Naive thymus-derived CD4-positive, alpha-beta T cell (primary cell): ENCODE measurements at regions of chr12 and their contacts with region 1.

Region 1: DNA sequence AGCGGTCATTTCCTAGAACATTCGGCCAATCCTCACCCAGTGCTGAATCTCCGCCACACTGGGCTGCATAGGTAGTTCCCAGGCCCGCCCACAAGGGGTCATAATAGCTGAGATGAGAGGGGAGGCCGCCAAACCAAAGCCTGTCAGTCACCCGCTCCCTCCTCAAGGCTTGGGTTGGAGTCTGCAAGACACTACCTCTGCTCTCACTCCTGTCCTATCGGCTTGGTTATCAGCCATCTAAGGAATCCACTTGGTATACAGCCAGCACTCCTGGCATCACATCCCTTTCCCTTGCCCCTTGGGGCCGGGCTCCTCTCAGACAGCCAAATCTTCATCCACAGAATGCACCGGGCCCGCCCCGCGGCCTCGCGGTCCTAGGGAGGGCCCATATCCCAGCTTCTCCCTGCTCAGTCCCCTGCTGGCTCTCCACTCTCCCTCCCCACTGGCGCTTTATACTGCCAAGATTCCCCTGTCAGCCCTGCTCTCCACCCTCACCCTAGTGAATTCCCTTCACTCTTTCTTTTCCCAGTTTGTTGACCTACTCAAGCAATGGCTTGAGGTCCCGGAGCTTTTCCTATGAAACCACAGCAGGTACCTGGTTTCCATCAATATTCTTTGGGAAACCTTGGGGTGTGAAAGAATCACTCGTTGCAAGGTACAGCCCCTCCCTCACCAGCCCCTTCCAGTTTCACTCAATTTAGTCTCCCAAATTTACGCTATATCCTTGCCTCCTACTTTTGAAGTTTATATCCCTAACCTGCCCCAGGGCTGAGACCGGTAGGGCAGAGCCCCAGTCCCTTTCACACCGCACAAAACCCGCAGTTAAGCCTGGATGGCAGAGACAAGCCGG is 1.4 kb downstream of the IFFO1 start:
- DNase-seq: peak; percentile 38 to 57 (median 52)
- ATAC-seq: peak; percentile 67
- H3K4me3 ChIP-seq: peak overlapping the region; percentile 92
- H3K4me3 Mint-ChIP-seq: peak overlapping the region; percentile 80 to 96 (median 90)
- H3K27ac ChIP-seq: peak overlapping the region; percentile 71
- H3K27ac Mint-ChIP-seq: peak overlapping the region; percentile 14 to 88 (median 55)
- H3K4me1 ChIP-seq: peaks cover 26 to 29% of the 10 kb centered on the region in 2 donors
- H3K4me1 Mint-ChIP-seq: peaks cover 39 to 62% (median 56%) of the 10 kb centered on the region in 7 donors
- H3K27me3 ChIP-seq: no peaks in the 10 kb centered on the region
- H3K27me3 Mint-ChIP-seq: no peaks in the 10 kb centered on the region

Region 2: GRCh38 chr12:5184186-5184585 is 1370.2 kb before region 1 on chr12:
- CTCF ChIA-PET with region 1: no interaction called
- POLR2A ChIA-PET with region 1: no interaction called
- intact Hi-C with region 1: no loop called
- DNase-seq: no peak
- ATAC-seq: no peak
- H3K4me3 ChIP-seq: no peak overlapping the region
- H3K4me3 Mint-ChIP-seq: no peak overlapping the region
- H3K27ac ChIP-seq: no peak overlapping the region
- H3K27ac Mint-ChIP-seq: no peak overlapping the region
- H3K4me1 ChIP-seq: no peaks in the 10 kb centered on the region
- H3K4me1 Mint-ChIP-seq: no peaks in the 10 kb centered on the region
- H3K27me3 ChIP-seq: no peaks in the 10 kb centered on the region
- H3K27me3 Mint-ChIP-seq: peaks cover 4 to 20% (median 5%) of the 10 kb centered on the region in 5 donors

Region 3: GRCh38 chr12:6294156-6295093 is 260.0 kb before region 1 on chr12:
- CTCF ChIA-PET with region 1: no interaction called
- POLR2A ChIA-PET with region 1: no interaction called
- intact Hi-C with region 1: no loop called
- DNase-seq: no peak
- ATAC-seq: no peak
- H3K4me3 ChIP-seq: no peak overlapping the region
- H3K4me3 Mint-ChIP-seq: no peak overlapping the region
- H3K27ac ChIP-seq: no peak overlapping the region
- H3K27ac Mint-ChIP-seq: no peak overlapping the region
- H3K4me1 ChIP-seq: no peaks in the 10 kb centered on the region
- H3K4me1 Mint-ChIP-seq: peaks cover 0 to 3% (median 0%) of the 10 kb centered on the region in 7 donors
- H3K27me3 ChIP-seq: no peaks in the 10 kb centered on the region
- H3K27me3 Mint-ChIP-seq: peaks cover 0 to 12% (median 5%) of the 10 kb centered on the region in 5 donors

Region 4: GRCh38 chr12:6323340-6323994 is 230.9 kb before region 1 on chr12:
- CTCF ChIA-PET with region 1: no interaction called
- POLR2A ChIA-PET with region 1: no interaction called
- intact Hi-C with region 1: loop called in 1 of 2 experiments (anchors 5 kb)
- DNase-seq: peak in 5 of 9 donors; percentile 49 to 59 (median 52)
- ATAC-seq: peak; percentile 90
- H3K4me3 ChIP-seq: peak overlapping the region; percentile 45
- H3K4me3 Mint-ChIP-seq: peak overlapping the region; percentile 63 to 90 (median 82)
- H3K27ac ChIP-seq: peak overlapping the region; percentile 35
- H3K27ac Mint-ChIP-seq: peak overlapping the region; percentile 68 to 95 (median 89)
- H3K4me1 ChIP-seq: peaks cover 27 to 38% of the 10 kb centered on the region in 2 donors
- H3K4me1 Mint-ChIP-seq: peaks cover 37 to 74% (median 53%) of the 10 kb centered on the region in 7 donors
- H3K27me3 ChIP-seq: no peaks in the 10 kb centered on the region
- H3K27me3 Mint-ChIP-seq: peaks cover 0 to 6% (median 0%) of the 10 kb centered on the region in 5 donors

Region 5: GRCh38 chr12:6461401-6462233 is 92.8 kb before region 1 on chr12:
- CTCF ChIA-PET with region 1: interaction called, 5 read pairs
- POLR2A ChIA-PET with region 1: interaction called, 5 read pairs
- intact Hi-C with region 1: loop called in 1 of 2 experiments (anchors 5 kb)
- DNase-seq: peak; percentile 41 to 91 (median 87)
- ATAC-seq: peak; percentile 93
- H3K4me3 ChIP-seq: peak overlapping the region; percentile 54
- H3K4me3 Mint-ChIP-seq: peak overlapping the region; percentile 74 to 89 (median 85)
- H3K27ac ChIP-seq: peak overlapping the region; percentile 93
- H3K27ac Mint-ChIP-seq: peak overlapping the region; percentile 95 to 99 (median 98)
- H3K4me1 ChIP-seq: peaks cover 59 to 81% of the 10 kb centered on the region in 2 donors
- H3K4me1 Mint-ChIP-seq: peaks cover 66 to 95% (median 87%) of the 10 kb centered on the region in 7 donors
- H3K27me3 ChIP-seq: no peaks in the 10 kb centered on the region
- H3K27me3 Mint-ChIP-seq: no peaks in the 10 kb centered on the region

Region 6: DNA sequence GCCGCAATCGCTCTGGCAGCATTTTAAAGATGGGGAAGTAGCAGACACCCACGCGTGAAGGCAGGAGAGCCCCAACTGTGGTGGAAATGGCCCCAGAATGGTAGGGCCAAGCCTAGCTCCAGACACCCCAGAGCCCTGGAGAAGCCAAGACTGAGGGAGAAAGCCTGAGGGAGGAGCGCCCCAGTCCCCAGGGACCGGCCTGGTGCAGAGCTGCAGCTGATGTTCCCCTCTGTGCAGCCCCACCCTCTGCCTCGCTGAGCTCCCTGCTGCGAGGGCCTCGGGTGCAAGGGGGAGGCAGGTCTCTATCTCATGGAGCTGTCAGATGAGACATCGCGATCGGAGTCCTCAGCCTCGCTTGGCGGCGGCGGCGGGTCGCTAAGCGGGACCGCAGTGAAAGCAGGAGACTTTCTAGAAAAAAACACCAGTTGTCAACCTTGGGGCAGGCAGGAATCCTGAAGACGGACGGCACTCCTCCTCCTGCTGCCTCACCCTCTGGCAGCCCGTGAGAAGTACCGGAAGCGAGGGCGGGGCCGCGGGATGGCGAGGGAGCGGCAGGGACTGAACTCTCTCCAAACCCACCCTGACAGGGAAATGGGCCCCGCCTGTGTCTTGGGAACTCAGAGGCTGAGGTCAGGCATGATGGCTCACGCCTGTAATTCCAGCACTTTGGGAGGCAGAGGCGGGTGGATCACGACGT is 14.1 kb before region 1 on chr12:
- CTCF ChIA-PET with region 1: interaction called, 12 read pairs
- POLR2A ChIA-PET with region 1: interaction called, 8 read pairs
- intact Hi-C with region 1: loop called in 1 of 2 experiments (anchors 2 kb)
- DNase-seq: peak in 6 of 9 donors; percentile 29 to 69 (median 36)
- ATAC-seq: peak; percentile 23
- H3K4me3 ChIP-seq: peak overlapping the region; percentile 27
- H3K4me3 Mint-ChIP-seq: peak overlapping the region; percentile 66 to 85 (median 80)
- H3K27ac ChIP-seq: peak overlapping the region; percentile 54
- H3K27ac Mint-ChIP-seq: peak overlapping the region; percentile 57 to 92 (median 83)
- H3K4me1 ChIP-seq: peaks cover 23 to 34% of the 10 kb centered on the region in 2 donors
- H3K4me1 Mint-ChIP-seq: peaks cover 32 to 61% (median 56%) of the 10 kb centered on the region in 7 donors
- H3K27me3 ChIP-seq: no peaks in the 10 kb centered on the region
- H3K27me3 Mint-ChIP-seq: no peaks in the 10 kb centered on the region

Region 7: GRCh38 chr12:6570264-6570887 is 16.0 kb after region 1 on chr12:
- CTCF ChIA-PET with region 1: interaction called, 7 read pairs
- POLR2A ChIA-PET with region 1: interaction called, 19 read pairs
- intact Hi-C with region 1: loop called (anchors 1 kb)
- DNase-seq: peak in 1 of 9 donors; percentile 51
- ATAC-seq: no peak
- H3K4me3 ChIP-seq: no peak overlapping the region
- H3K4me3 Mint-ChIP-seq: peak overlapping the region in 7 of 10 donors; percentile 36 to 100 (median 94)
- H3K27ac ChIP-seq: no peak overlapping the region
- H3K27ac Mint-ChIP-seq: peak overlapping the region; percentile 47 to 99 (median 86)
- H3K4me1 ChIP-seq: peaks cover 8 to 18% of the 10 kb centered on the region in 2 donors
- H3K4me1 Mint-ChIP-seq: peaks cover 17 to 49% (median 44%) of the 10 kb centered on the region in 7 donors
- H3K27me3 ChIP-seq: no peaks in the 10 kb centered on the region
- H3K27me3 Mint-ChIP-seq: no peaks in the 10 kb centered on the region

Region 8: GRCh38 chr12:6904280-6905278 is 350.2 kb after region 1 on chr12 and contains the start of gene LRRC23:
- CTCF ChIA-PET with region 1: no interaction called
- POLR2A ChIA-PET with region 1: no interaction called
- intact Hi-C with region 1: loop called in 1 of 2 experiments (anchors 5 kb)
- DNase-seq: peak; percentile 89 to 98 (median 95)
- ATAC-seq: peak; percentile 98
- H3K4me3 ChIP-seq: peak within 1 kb of the TSS; percentile 75
- H3K4me3 Mint-ChIP-seq: peak within 1 kb of the TSS in 1 of 10 donors; percentile 8
- H3K27ac ChIP-seq: peak within 1 kb of the TSS; percentile 93
- H3K27ac Mint-ChIP-seq: peak within 1 kb of the TSS in 1 of 9 donors; percentile 78
- H3K4me1 ChIP-seq: peaks cover 14 to 17% of the 10 kb centered on the region in 2 donors
- H3K4me1 Mint-ChIP-seq: peaks cover 0 to 10% (median 3%) of the 10 kb centered on the region in 7 donors
- H3K27me3 ChIP-seq: no peaks in the 10 kb centered on the region
- H3K27me3 Mint-ChIP-seq: no peaks in the 10 kb centered on the region
- total RNA-seq, gene LRRC23: 6.6 to 12.1 (median 7.3) TPM